ENCODE measurements at regions of chr18 and their contacts with region 1.

Region 1: GRCh38 chr18:22933206-22933957 is at the start of gene RBBP8:
- DNase-seq: peak; percentile 16
- H3K4me3 ChIP-seq: peak within 1 kb of the TSS; percentile 89
- H3K27me3 ChIP-seq: no peaks in the 10 kb centered on the region
- CTCF ChIP-seq: no peak
- polyA plus RNA-seq, gene RBBP8: 11.0 and 24.6 TPM in 2 replicates

Region 2: DNA sequence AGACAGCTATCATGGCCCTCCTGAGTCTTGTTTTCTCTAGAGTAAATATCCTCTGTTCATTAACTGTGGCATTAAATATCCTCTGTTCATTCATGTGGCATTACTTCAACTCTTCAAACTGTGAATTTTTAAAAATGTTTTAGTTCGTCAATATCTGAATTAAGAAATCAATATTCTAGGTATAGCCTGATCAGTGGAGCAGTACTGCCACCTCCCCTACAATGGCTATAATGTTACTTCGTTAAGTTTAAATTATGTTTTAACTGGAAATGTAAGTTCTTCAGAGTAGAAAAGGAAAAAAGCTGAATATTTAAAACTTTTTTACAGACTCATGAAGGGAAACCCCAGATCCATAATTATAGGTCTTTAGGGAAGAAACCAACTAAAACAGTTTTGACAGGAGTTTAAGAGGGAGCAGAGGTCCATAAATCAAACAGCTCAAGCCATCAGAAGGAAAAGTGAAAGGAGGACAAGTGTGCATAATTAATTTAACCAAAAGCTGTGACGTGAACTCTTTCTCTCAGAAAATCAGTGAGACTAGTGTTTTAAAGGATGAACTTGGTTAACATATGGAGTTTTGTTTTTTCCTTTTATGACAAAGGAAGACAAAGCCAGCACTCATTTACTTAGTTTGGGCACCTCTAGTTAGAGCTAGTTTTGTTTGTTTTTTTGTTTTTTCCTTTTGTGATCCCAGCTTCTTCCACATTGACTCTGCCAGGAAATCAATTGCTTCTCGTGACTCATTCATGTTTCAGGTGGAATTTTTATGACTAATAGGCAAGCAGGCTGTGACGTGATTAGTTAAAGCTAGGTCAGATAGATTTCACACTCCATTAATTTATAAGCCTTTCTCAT is 44.7 kb after region 1 on chr18:
- CTCF ChIA-PET with region 1: interaction called, 37 read pairs
- POLR2A ChIA-PET with region 1: no interaction called
- DNase-seq: peak; percentile 67
- H3K4me3 ChIP-seq: no peak overlapping the region
- H3K27me3 ChIP-seq: no peaks in the 10 kb centered on the region
- CTCF ChIP-seq: no peak

Region 3: GRCh38 chr18:22983175-22983574 is 49.8 kb after region 1 on chr18:
- CTCF ChIA-PET with region 1: interaction called, 37 read pairs
- POLR2A ChIA-PET with region 1: no interaction called
- DNase-seq: no peak
- H3K4me3 ChIP-seq: no peak overlapping the region
- H3K27me3 ChIP-seq: no peaks in the 10 kb centered on the region
- CTCF ChIP-seq: peak; percentile 46

Region 4: GRCh38 chr18:23099621-23100020 is 166.2 kb after region 1 on chr18:
- CTCF ChIA-PET with region 1: no interaction called
- POLR2A ChIA-PET with region 1: no interaction called
- DNase-seq: no peak
- H3K4me3 ChIP-seq: no peak overlapping the region
- H3K27me3 ChIP-seq: no peaks in the 10 kb centered on the region
- CTCF ChIP-seq: no peak

Region 5: DNA sequence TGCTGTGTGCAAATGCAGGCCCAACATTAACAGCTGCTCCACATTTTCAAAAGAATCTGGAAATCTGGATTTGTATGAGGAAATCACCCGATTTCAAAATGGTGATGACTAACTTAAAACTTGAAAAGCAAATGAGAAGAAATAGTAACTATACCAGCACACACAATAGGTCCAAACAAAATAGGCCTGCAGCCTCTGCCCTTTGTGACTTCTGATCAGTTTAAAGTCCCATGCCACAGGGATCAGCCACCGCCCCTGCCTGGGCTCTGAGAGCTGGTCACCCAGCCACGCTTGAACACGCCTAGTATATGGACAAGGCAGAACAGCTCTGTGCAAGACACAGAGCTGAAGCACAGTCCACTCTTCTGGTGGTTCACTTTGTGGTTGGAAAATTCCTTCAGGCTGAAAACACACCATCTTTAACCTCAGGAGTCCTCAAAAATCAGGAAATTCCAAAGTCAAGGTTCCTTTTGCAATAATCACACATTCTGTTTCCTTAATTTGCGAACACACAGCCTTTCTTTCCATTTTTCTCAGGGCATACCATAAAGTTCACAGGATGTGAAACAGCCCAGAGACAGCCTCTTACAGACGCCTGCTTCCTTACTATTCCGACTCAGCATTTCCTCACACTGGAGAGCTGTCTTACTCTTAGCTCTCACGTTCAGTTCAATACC is 369.6 kb after region 1 on chr18:
- CTCF ChIA-PET with region 1: no interaction called
- POLR2A ChIA-PET with region 1: interaction called, 12 read pairs
- DNase-seq: peak; percentile 76
- H3K4me3 ChIP-seq: no peak overlapping the region
- H3K27me3 ChIP-seq: no peaks in the 10 kb centered on the region
- CTCF ChIP-seq: no peak

Measured in BJ (cell line).